AG04449 (cell line): ENCODE measurements at regions of chr2 and their contacts with region 1.

Region 1: DNA sequence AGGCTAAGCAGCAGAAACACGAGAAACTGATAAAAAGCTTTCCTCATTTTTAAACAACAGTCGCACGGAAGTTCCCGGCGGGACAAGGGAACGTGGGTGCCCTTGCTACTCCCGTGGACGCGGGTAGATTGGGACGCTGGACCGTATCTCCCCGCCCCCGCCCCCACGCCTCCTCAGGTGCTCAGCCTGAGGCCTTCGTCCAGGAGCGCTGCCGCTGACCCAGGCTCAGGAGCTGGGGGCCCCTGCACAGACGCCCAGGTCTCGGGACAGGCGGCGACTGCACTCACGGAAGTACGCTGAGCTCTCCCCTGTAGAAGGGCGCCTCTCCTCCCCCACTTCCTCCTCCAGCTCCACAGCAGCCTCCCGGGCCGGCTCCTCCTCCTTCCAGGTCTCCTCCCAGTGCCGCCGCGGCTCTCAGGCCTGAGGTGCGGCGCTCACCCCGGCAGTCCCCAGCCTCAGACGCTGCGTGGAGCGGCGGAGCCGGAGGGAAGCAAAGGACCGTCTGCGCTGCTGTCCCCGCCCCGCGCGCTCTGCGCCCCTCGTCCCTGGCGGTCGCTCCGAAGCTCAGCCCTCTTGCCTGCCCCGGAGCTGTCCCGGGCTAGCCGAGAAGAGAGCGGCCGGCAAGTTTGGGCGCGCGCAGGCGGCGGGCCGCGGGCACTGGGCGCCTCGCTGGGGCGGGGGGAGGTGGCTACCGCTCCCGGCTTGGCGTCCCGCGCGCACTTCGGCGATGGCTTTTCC is at the start of gene ITGAV:
- DNase-seq: peak; percentile 34
- H3K4me3 ChIP-seq: peak within 1 kb of the TSS; percentile 87
- CTCF ChIP-seq: no peak

Region 2: GRCh38 chr2:186485871-186486650 is 103.7 kb before region 1 on chr2 and contains the start of gene ZC3H15:
- CTCF ChIA-PET with region 1: no interaction called
- POLR2A ChIA-PET with region 1: interaction called, 11 read pairs
- DNase-seq: peak; percentile 92
- H3K4me3 ChIP-seq: peak within 1 kb of the TSS; percentile 82
- CTCF ChIP-seq: no peak

Region 3: DNA sequence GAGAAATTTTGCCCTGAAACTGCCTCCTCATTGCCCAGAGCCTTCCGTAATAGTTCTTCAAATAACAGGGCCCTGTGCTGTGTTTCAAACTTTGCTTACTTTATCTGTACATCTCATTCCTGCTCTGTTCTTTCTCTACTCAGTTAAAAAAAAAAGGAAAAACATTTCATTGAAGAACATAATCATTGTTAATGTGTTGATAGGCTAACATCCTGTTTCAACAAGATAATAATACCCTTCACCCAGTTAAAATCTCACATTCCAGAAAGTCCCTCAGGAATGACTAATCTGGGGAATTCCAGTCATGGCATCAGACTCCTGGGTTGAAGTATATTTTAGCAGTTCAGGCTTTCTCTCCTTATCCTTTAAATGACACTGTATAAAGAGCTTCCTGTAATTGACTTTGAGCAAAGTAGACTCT is 45.5 kb before region 1 on chr2:
- CTCF ChIA-PET with region 1: interaction called, 3 read pairs
- POLR2A ChIA-PET with region 1: interaction called, 10 read pairs
- DNase-seq: no peak
- H3K4me3 ChIP-seq: no peak overlapping the region
- CTCF ChIP-seq: no peak

Region 4: GRCh38 chr2:186551323-186552050 is 38.3 kb before region 1 on chr2:
- CTCF ChIA-PET with region 1: no interaction called
- POLR2A ChIA-PET with region 1: interaction called, 10 read pairs
- DNase-seq: peak; percentile 42
- H3K4me3 ChIP-seq: no peak overlapping the region
- CTCF ChIP-seq: no peak

Region 5: DNA sequence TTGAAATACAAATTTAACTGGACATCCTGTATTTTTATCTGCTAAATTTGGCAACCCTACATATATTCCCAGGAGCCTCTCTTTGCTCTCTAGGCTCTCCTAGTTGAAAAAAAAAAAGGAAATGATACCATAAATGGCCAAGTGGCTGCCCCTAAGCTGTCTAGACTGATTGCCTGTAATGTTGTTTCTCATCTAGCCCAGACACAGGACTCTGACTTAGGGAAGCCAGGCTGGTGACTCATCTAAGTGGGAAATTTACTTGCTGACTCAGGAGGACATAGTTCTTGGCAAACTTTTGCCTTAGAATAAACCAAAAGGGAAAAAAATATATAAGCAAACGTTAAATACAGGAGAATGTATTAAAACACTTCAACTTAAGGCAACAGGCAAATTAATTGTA is 14.5 kb before region 1 on chr2:
- CTCF ChIA-PET with region 1: interaction called, 10 read pairs
- POLR2A ChIA-PET with region 1: interaction called, 19 read pairs
- DNase-seq: peak; percentile 98
- H3K4me3 ChIP-seq: no peak overlapping the region
- CTCF ChIP-seq: no peak